Head of caudate nucleus (tissue), 42 donors: ENCODE measurements at regions of chr11 and their contacts with region 1.

Region 1: DNA sequence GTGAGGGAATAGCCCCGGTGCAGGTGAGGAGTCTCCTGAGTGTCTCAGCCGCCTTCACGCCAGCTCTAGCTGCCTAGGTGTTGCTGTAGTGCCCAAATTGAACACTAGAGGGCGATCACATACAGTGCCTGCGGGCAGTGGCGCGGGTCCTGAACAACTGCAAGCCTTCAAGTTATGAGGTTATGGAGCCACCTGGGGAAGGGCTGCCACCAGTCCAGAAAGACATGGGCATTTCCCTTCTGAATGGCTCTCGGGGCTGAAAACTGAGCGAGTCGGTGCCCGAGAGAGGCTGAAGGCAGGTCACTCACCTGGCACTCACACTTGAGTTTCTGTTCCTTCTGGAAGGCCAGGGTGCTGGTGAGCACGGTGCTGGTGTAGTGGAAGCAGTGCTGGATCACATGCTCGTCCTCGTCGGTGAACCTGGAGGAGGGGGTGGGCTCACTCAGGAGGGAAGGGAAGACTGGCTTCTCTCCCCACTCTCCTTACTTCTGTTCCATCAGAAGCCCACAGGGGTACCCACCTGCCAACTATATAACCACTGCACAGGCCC is 88.4 kb downstream of the PDE2A start:
- DNase-seq: peak; percentile 44 to 89 (median 70)

Region 2: DNA sequence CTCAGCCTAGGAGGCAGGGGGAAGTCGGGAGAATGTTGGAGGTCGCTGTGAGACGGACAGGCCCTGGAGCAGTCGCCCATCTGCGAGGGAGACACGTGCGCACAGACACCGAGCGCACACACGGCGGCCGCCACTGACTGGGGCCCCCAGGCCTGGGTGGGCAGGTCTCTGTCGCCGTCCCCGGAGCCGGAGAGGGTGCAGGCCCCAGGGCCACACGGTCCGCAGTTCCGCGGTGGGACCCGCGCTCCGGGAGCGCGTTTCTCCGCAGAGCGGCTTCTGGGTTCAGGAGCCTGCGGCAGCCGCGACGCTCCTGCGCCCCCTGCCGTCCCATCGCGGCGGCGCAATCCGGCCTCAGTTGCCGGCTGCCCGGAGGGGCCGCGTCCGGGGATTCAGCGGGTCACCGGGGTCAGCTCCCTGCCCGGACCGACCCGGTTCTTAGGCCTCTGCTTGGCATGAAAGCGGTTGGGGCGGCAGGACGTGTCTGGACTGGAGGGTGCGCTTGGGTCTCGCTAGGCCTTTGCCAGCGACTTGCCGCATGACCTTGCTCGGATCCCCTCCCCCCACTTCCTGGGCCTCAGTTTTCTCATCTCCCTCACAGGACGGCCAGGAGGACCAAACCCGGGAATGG is 57.2 kb after region 1 on chr11:
- intact Hi-C with region 1: loop called (anchors 5 kb)
- DNase-seq: peak in 38 of 42 donors; percentile 43 to 85 (median 71)

Region 3: DNA sequence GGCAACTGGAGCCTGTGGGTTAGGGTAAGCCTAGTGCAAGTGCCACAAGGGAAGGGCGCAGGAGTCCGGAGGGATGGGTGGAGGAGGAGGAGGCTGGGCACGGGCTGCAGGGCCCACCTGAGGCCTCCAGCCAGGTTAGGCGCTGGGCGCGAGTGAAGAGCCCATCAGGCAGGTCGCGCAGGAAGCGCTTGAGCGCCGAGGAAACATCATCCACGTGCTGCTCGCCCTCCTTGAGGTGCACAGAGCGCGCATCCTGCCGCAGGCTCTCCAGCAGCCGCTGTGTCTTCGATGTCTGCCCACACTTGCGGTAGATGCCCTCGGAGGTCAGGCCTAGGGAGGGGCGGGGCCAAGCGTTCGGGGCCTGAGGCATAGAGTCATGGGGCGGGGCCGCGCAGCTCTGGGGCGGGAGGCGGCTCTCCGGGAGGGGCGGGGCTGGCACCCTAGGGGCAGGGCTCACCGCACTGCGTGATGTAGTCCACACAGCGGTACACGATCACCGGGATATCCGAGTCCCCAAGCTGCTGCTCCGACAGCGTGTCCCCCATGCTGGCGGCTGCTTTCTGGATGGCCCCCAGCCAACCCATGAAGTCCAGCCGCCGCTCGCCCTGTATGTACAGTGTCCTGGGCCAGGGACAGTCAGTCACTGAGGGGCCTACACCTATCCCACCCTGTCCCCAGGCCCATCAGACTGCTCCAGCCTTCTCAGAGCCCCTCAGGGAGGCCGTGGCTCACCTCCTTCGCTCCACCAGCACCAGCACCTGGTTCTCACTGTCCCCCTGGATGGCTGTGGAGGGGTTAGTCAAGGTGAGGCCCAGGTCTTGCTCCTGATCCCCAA is 111.2 kb after region 1 on chr11:
- intact Hi-C with region 1: no loop called
- DNase-seq: no peak